Activated CD8-positive, alpha-beta T cell treated with anti-CD3 and anti-CD28 coated beads, Interleukin-2, amount 10 ng/mL, durations not matched to agents 7 days and 5 days (primary cell): ENCODE measurements at regions of chr1 and their contacts with region 1.

Region 1: GRCh38 chr1:26500488-26501175 is 28.4 kb downstream of the HMGN2 start:
- DNase-seq: peak; percentile 92
- ATAC-seq: peak; percentile 77
- H3K4me3 Mint-ChIP-seq: peak overlapping the region; percentile 86
- H3K27ac Mint-ChIP-seq: peak overlapping the region; percentile 97
- H3K4me1 Mint-ChIP-seq: peaks cover 32% of the 10 kb centered on the region
- H3K27me3 Mint-ChIP-seq: no peaks in the 10 kb centered on the region

Region 2: GRCh38 chr1:26472901-26473845 is 27.5 kb before region 1 on chr1:
- CTCF ChIA-PET with region 1: interaction called, 13 read pairs
- POLR2A ChIA-PET with region 1: interaction called, 24 read pairs
- DNase-seq: peak; percentile 95
- ATAC-seq: peak; percentile 69
- H3K4me3 Mint-ChIP-seq: peak overlapping the region; percentile 92
- H3K27ac Mint-ChIP-seq: peak overlapping the region; percentile 57
- H3K4me1 Mint-ChIP-seq: peaks cover 44% of the 10 kb centered on the region
- H3K27me3 Mint-ChIP-seq: no peaks in the 10 kb centered on the region

Region 3: DNA sequence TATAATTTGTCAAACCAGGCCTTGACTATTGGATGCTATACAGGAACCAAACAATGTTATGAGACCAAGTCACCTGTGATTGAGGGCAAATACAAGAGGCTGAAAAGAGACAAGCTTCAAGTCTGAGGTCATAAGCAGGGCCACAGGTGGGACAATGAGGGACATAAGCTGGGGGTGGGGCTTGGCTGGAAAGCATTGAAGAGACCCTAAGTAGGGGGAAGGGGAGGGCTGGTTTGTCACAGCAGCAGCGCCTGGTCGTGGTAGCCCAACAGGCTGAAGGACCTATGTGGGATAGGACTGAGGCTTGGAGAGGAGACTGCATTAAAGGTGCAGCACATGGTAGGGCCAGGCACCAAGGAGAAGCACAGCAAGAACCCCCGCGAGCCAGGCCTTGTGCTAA is 10.5 kb before region 1 on chr1:
- CTCF ChIA-PET with region 1: interaction called, 17 read pairs
- POLR2A ChIA-PET with region 1: interaction called, 10 read pairs
- DNase-seq: no peak
- ATAC-seq: no peak
- H3K4me3 Mint-ChIP-seq: no peak overlapping the region
- H3K27ac Mint-ChIP-seq: no peak overlapping the region
- H3K4me1 Mint-ChIP-seq: peaks cover 2% of the 10 kb centered on the region
- H3K27me3 Mint-ChIP-seq: no peaks in the 10 kb centered on the region

Region 4: DNA sequence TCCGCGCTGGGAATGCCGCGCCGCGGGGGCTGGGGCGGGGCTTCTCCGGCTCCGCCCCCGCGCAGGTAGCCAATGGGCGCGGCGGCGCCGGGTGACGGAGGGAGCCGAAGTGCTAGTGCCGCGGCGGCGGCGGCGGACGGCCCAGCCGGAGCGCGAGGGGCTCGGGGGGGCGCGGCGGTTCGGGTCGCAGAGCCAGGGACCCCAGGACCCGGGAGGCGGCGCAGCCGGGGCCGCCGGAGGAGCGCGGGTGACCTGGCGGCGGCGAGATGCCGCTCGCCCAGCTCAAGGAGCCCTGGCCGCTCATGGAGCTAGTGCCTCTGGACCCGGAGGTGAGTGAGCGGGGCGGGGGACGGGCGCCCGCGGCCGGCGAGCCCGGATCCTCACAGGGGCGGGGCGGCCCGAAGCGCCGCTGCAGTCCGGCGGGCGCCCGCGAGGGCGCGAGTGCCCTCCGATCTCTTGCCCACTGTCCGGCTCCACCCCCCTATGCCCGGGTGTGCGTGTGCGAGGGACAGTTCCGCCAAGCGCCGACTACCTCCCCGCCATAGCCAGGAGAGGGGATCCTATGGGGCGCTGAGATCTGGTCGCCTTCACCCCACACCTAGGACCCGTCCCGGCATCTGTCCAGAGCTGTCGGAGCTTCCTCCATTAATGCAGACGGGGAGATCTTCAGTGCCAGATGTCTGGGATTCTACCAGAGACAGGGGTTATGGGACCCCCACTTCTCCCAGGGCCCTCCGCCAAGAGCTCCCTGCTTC is 29.2 kb after region 1 on chr1 and contains the start of gene RPS6KA1:
- CTCF ChIA-PET with region 1: interaction called, 26 read pairs
- POLR2A ChIA-PET with region 1: interaction called, 7 read pairs
- DNase-seq: peak; percentile 66
- ATAC-seq: peak; percentile 92
- H3K4me3 Mint-ChIP-seq: peak within 1 kb of the TSS; percentile 85
- H3K27ac Mint-ChIP-seq: peak within 1 kb of the TSS; percentile 89
- H3K4me1 Mint-ChIP-seq: peaks cover 39% of the 10 kb centered on the region
- H3K27me3 Mint-ChIP-seq: peaks cover 3% of the 10 kb centered on the region
- total RNA-seq, gene RPS6KA1: 179 to 193 TPM

Region 5: GRCh38 chr1:26535201-26535600 is 34.6 kb after region 1 on chr1:
- CTCF ChIA-PET with region 1: interaction called, 92 read pairs
- POLR2A ChIA-PET with region 1: interaction called, 19 read pairs
- DNase-seq: no peak
- ATAC-seq: no peak
- H3K4me3 Mint-ChIP-seq: no peak overlapping the region
- H3K27ac Mint-ChIP-seq: peak overlapping the region; percentile 66
- H3K4me1 Mint-ChIP-seq: peaks cover 77% of the 10 kb centered on the region
- H3K27me3 Mint-ChIP-seq: no peaks in the 10 kb centered on the region